HCT116 (cell line): ENCODE measurements at regions of chr10 and their contacts with region 1.

Region 1: DNA sequence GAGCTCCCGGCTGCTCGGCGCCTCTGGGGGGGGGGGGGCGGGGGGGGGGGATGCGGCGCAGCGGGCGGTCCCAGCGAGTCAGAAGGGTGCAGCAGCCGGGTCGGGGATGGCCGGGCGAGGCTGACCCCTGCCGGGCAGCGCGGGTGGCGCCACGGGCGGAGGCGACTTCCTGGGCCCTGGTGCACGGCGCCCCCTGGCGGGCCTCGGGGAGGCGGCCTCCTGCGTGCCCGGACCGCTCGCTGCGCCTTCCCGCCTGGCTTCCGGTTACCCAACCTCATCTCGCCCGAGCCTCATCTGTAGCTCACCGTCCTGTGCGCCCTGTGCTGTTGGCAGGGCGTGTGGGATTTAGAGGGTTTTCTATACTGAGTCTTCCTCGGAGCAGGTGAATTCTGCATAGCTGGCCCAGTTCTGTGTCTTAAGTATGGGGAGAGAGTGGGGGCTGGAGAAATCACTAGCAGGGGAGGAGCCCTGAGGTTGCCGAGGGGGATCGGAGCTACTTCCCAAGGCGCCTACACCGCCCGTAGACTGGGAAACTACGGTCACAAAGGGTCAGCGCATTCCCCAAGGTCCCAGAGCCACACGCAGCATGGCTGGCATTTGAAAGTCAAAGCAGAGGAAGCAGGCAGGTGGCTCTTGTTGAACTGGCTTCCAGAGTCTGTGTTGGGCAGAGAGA is 28.3 kb upstream of the WDFY4 start:
- DNase-seq: peak; percentile 69
- ATAC-seq: peak; percentile 87
- H3K4me3 ChIP-seq: peak overlapping the region; percentile 54 to 69
- H3K27ac ChIP-seq: peak overlapping the region; percentile 77; the same call in 1 of the 2 replicates
- H3K4me1 ChIP-seq: peaks cover 0 to 22% of the 10 kb centered on the region in 2 experiments; a peak in 2 of 4 replicates
- H3K27me3 ChIP-seq: peaks cover 14% of the 10 kb centered on the region
- CTCF ChIP-seq: peak; percentile 86 to 98 (median 93)
- POLR2A ChIP-seq: no peak
- RAD21 ChIP-seq: peak; percentile 87

Region 2: DNA sequence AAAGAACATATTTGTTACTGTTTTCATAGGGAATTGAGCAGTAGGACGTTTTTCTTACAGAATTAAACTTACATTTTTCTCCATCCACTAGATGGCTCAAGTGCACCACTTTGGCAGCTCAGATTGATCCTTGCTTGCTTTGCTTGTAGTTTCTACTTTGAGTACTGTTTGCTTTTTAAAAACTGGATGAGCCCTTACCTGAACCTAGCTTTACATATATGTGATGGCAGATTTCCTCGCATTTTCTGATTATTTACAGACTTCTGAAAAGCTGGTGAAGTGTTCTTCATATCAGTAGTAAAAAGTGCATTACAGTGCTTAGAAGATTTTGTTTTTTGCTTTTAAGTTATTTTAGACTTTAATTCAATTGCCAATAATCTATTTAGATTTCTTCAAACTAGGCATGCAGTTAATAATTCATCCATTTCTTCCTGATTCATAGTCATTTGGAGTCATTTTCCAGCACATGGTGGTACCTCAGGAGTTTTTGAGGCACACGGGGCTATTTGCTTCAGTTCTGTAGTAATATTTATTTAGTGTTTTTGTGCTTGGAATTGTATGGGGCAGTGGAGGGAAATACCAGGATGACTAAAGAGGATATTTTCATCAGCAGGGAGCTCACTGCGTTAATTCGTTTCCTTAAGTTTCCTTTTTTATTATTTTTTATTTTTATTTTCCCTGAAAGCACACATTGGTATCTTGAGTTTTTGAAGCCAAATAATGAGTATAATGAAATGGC is 292.6 kb before region 1 on chr10:
- CTCF ChIA-PET with region 1: interaction called, 49 read pairs
- POLR2A ChIA-PET with region 1: no interaction called
- RAD21 ChIA-PET with region 1: interaction called, 3 to 4 read pairs
- intact Hi-C with region 1: loop called (anchors 1 kb)
- DNase-seq: peak; percentile 43
- ATAC-seq: peak; percentile 65
- H3K4me3 ChIP-seq: no peak overlapping the region
- H3K27ac ChIP-seq: no peak overlapping the region
- H3K4me1 ChIP-seq: peaks cover 0 to 2% of the 10 kb centered on the region in 2 experiments; a peak in 1 of 4 replicates
- H3K27me3 ChIP-seq: no peaks in the 10 kb centered on the region
- CTCF ChIP-seq: peak; percentile 51 to 84 (median 79); a peak in 5 of 6 replicates
- POLR2A ChIP-seq: no peak
- RAD21 ChIP-seq: peak; percentile 89

Region 3: GRCh38 chr10:48523820-48524758 is 132.3 kb before region 1 on chr10:
- CTCF ChIA-PET with region 1: interaction called, 15 read pairs
- POLR2A ChIA-PET with region 1: no interaction called
- RAD21 ChIA-PET with region 1: no interaction called
- intact Hi-C with region 1: no loop called
- DNase-seq: no peak
- ATAC-seq: peak; percentile 79
- H3K4me3 ChIP-seq: peak overlapping the region; percentile 54 to 70
- H3K27ac ChIP-seq: peak overlapping the region; percentile 60
- H3K4me1 ChIP-seq: peaks cover 6 to 10% of the 10 kb centered on the region in 2 experiments; a peak in 3 of 4 replicates
- H3K27me3 ChIP-seq: no peaks in the 10 kb centered on the region
- CTCF ChIP-seq: peak; percentile 39 to 81 (median 74); a peak in 5 of 6 replicates
- POLR2A ChIP-seq: peak; percentile 25
- RAD21 ChIP-seq: peak; percentile 29; the same call in 1 of the 2 replicates

Region 4: DNA sequence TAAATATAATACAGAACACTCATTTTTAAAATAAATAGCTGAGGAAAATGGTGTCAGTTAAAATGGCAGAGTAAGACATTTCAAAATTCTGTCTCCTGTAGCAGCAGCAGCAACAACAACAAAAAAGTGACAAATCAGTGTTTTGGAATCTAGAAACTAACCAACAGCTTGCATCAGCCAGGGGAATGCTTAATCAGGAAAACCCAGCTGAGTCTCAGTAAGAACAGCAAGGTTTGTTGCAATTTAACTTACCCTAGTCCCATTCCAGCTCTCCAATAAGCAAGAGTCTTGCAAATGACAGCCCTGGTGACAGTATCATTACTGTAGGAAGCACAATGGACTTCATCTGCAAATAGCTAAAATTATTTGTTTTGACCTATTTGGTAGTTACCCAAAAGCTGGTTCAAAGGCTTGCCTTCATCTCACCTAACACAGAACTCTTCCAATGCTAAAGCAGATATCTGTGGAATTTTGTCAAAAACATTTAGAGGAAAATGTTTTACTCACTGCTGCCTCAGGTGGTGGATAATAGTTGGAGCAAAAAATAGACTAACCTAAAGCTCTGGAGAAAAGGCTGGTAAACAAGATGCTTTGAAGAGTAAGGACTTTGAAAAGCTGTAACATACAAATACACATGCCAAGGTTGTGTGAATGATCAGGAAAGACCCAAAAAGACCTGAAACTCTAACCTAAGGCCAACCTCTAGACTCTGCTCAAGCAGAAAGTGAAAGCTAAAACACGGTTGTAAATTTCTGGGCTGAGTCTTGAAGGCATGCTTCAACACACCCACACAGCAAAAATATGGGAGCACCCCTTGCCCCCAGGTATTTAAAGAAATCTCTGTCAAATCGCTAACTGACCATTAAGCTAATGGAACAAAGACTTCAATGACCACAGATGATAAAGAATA is 41.6 kb before region 1 on chr10:
- CTCF ChIA-PET with region 1: interaction called, 64 read pairs
- POLR2A ChIA-PET with region 1: no interaction called
- RAD21 ChIA-PET with region 1: interaction called in 1 of 2 experiments, 3 read pairs
- intact Hi-C with region 1: loop called (anchors 10 kb)
- DNase-seq: no peak
- ATAC-seq: peak; percentile 64
- H3K4me3 ChIP-seq: no peak overlapping the region
- H3K27ac ChIP-seq: no peak overlapping the region
- H3K4me1 ChIP-seq: no peaks in the 10 kb centered on the region
- H3K27me3 ChIP-seq: no peaks in the 10 kb centered on the region
- CTCF ChIP-seq: peak; percentile 8 to 57 (median 47); a peak in 4 of 6 replicates
- POLR2A ChIP-seq: no peak
- RAD21 ChIP-seq: no peak

Region 5: DNA sequence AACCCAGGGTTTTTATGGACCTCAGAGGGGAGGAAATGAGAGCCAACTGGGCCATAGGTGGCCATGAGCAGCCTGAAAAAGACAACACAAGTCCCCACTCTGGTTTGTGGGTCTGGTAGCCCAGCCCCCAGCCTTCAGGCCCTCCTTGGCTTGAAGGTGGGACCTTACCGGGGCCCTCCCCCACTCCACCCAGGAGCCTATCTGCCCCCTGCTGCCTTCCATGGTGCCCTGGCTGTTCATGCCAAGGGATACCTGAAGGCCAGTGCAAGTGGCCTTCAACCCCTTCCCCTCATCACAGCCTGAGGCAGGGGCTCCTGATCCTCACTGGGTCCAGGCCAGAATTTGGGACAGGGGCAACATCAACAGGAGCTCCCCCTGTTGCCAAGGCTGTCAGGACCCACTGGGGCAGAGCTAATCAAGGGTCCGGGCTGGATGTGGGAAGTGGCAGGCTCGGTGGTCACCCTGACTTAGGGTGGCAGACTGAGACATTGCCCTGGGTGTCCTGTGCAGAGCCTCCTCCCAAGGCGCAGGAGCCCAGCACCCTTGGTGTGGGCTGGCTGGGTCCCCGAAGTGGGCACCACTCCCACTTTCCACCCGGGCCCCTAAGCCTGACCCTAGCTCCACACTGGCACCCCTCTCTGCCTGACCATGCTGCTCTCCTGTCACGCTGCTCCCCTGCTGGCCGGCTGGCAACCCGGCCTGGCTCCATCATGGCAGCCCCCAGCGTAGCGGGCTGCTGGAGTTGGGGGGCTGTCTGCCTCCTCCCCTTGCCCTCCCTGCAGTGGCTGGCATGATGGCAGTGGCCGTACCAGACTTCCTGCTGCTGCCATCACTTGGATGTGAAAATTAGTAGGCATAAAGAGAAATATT is 34.6 kb after region 1 on chr10:
- CTCF ChIA-PET with region 1: no interaction called
- POLR2A ChIA-PET with region 1: no interaction called
- RAD21 ChIA-PET with region 1: no interaction called
- intact Hi-C with region 1: no loop called
- DNase-seq: no peak
- ATAC-seq: no peak
- H3K4me3 ChIP-seq: no peak overlapping the region
- H3K27ac ChIP-seq: no peak overlapping the region
- H3K4me1 ChIP-seq: no peaks in the 10 kb centered on the region
- H3K27me3 ChIP-seq: peaks cover 27% of the 10 kb centered on the region
- CTCF ChIP-seq: no peak
- POLR2A ChIP-seq: no peak
- RAD21 ChIP-seq: no peak

Region 6: GRCh38 chr10:49407552-49408137 is 751.3 kb after region 1 on chr10:
- CTCF ChIA-PET with region 1: interaction called, 16 read pairs
- POLR2A ChIA-PET with region 1: no interaction called
- RAD21 ChIA-PET with region 1: no interaction called
- intact Hi-C with region 1: loop called (anchors 10 kb)
- DNase-seq: peak; percentile 57
- ATAC-seq: peak; percentile 93
- H3K4me3 ChIP-seq: no peak overlapping the region
- H3K27ac ChIP-seq: no peak overlapping the region
- H3K4me1 ChIP-seq: no peaks in the 10 kb centered on the region
- H3K27me3 ChIP-seq: peaks cover 36% of the 10 kb centered on the region
- CTCF ChIP-seq: peak; percentile 85 to 96 (median 94)
- POLR2A ChIP-seq: no peak
- RAD21 ChIP-seq: peak; percentile 88

Region 7: DNA sequence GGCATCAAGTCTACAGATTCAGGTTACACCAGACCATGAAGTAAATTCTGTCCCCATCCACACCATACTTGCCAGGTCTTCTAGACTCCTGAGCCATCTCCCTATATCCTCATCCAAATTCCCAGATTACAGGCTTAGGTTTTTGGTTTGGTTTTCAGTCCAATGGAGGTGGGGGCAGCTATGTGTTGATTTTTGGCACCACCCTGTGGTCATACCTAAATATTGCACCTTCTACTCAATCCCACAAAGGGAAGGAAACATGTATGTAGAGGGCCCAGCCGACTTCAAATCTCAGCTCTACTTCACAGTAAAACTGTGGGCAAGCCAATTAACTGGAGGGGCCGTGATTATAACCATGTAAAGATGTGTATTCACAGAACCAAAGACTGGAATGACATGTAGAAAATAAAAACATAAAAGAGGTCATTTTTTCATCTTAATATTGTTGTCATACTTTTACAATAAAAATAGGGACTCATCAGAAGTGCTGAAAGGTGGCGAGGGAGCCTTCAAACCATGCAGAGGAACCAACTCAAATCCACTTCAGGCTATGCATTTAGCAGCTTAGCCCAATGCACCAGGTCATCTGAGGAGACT is 862.7 kb after region 1 on chr10:
- CTCF ChIA-PET with region 1: interaction called, 12 read pairs
- POLR2A ChIA-PET with region 1: no interaction called
- RAD21 ChIA-PET with region 1: no interaction called
- intact Hi-C with region 1: no loop called
- DNase-seq: peak; percentile 32
- ATAC-seq: peak; percentile 87
- H3K4me3 ChIP-seq: no peak overlapping the region
- H3K27ac ChIP-seq: no peak overlapping the region
- H3K4me1 ChIP-seq: no peaks in the 10 kb centered on the region
- H3K27me3 ChIP-seq: no peaks in the 10 kb centered on the region
- CTCF ChIP-seq: peak; percentile 61 to 73 (median 68)
- POLR2A ChIP-seq: no peak
- RAD21 ChIP-seq: peak; percentile 72